ENCODE measurements at regions of chr18 and their contacts with region 1.

Region 1: GRCh38 chr18:32271672-32272208 is 81.9 kb downstream of the MEP1B start:
- DNase-seq: peak; percentile 31 to 59 (median 56)
- H3K4me3 ChIP-seq: no peak overlapping the region
- H3K27ac ChIP-seq: no peak overlapping the region
- H3K4me1 ChIP-seq: no peaks in the 10 kb centered on the region
- H3K27me3 ChIP-seq: peaks cover 0 to 12% (median 0%) of the 10 kb centered on the region in 5 experiments

Region 2: DNA sequence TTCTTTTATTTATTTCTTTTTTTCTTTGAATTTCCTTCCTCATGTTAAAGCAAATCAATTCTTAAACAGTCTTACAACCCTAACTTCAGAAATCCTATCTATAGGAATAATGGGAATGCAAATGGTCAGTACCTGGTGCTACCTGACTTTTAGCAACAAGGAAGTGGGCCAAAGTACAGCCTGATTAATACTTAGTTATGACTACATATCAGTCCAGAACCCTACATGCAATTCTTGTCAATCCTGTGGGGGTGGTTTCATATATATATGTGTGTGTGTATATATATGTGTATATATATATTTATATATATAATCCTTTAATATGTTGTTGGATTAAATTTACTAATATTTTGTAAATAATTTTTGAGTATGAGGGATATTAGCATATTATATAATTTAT is 314.0 kb before region 1 on chr18:
- CTCF ChIA-PET with region 1: no interaction called
- POLR2A ChIA-PET with region 1: no interaction called
- DNase-seq: no peak
- H3K4me3 ChIP-seq: no peak overlapping the region
- H3K27ac ChIP-seq: no peak overlapping the region
- H3K4me1 ChIP-seq: no peaks in the 10 kb centered on the region
- H3K27me3 ChIP-seq: no peaks in the 10 kb centered on the region

Region 3: GRCh38 chr18:32158108-32158624 is 113.6 kb before region 1 on chr18:
- CTCF ChIA-PET with region 1: interaction called, 14 read pairs
- POLR2A ChIA-PET with region 1: no interaction called
- DNase-seq: peak; percentile 83 to 91 (median 90)
- H3K4me3 ChIP-seq: peak overlapping the region in 3 of 7 experiments; percentile 23 to 42 (median 40)
- H3K27ac ChIP-seq: no peak overlapping the region
- H3K4me1 ChIP-seq: peaks cover 0 to 6% (median 4%) of the 10 kb centered on the region in 4 experiments
- H3K27me3 ChIP-seq: peaks cover 0 to 6% (median 2%) of the 10 kb centered on the region in 5 experiments

Region 4: GRCh38 chr18:32195881-32196815 is 75.6 kb before region 1 on chr18:
- CTCF ChIA-PET with region 1: no interaction called
- POLR2A ChIA-PET with region 1: no interaction called
- DNase-seq: no peak
- H3K4me3 ChIP-seq: no peak overlapping the region
- H3K27ac ChIP-seq: no peak overlapping the region
- H3K4me1 ChIP-seq: no peaks in the 10 kb centered on the region
- H3K27me3 ChIP-seq: peaks cover 0 to 2% (median 0%) of the 10 kb centered on the region in 5 experiments

Region 5: DNA sequence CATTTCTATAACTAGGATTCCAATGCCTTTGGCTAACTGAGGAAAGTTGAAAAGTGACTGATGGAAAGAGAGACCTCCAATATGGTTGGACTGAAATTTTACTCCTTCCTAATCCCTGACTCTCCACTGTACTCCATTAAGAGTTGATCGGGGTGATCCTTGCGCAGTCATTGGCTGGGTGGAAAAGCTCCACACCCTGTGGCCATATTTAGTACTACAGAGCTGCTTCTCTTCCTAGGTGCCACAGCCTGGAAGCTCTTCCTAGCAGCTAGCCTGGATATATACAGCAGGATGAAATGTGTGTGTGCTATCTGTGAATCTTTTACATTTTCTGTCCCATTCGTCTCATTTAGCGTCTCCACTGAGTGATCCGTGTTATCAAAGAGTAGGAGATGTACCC is 10.7 kb before region 1 on chr18:
- CTCF ChIA-PET with region 1: interaction called, 17 read pairs
- POLR2A ChIA-PET with region 1: no interaction called
- DNase-seq: no peak
- H3K4me3 ChIP-seq: no peak overlapping the region
- H3K27ac ChIP-seq: no peak overlapping the region
- H3K4me1 ChIP-seq: peaks cover 8 to 27% (median 20%) of the 10 kb centered on the region in 4 experiments
- H3K27me3 ChIP-seq: no peaks in the 10 kb centered on the region

Region 6: GRCh38 chr18:32289483-32290075 is 17.8 kb after region 1 on chr18:
- CTCF ChIA-PET with region 1: interaction called, 16 read pairs
- POLR2A ChIA-PET with region 1: no interaction called
- DNase-seq: peak; percentile 65 to 81 (median 75)
- H3K4me3 ChIP-seq: no peak overlapping the region
- H3K27ac ChIP-seq: no peak overlapping the region
- H3K4me1 ChIP-seq: no peaks in the 10 kb centered on the region
- H3K27me3 ChIP-seq: peaks cover 3 to 28% (median 8%) of the 10 kb centered on the region in 5 experiments

Region 7: DNA sequence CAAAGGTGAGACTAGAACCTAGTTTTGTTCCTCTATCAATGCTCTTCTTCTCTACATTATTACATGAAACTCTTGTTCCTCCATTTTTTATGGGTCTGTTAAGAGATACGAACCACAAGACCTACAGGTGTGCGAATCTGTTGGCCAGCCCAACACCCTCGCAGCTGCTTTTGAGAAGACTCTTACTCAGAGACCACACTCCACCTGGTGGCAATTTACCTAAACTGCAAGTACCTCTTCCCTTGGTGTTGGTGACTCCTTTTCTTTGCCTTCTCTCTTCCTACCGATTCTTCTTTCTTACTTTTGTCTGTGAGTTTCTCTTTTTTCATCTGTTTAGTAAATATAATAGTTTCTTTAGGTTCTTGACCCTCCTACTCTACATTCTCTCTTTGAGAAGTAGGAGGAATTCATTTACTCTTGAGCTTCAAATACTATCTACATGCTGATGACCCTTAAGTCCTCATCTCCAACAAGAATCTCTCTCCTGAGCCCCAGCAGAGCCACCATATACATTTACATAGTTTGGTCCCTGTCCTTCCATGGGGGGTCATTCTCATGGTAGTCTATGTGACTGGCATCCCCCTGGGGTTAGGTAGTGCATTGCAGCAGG is 280.8 kb after region 1 on chr18:
- CTCF ChIA-PET with region 1: interaction called, 13 read pairs
- POLR2A ChIA-PET with region 1: no interaction called
- DNase-seq: peak; percentile 69 to 84 (median 78)
- H3K4me3 ChIP-seq: no peak overlapping the region
- H3K27ac ChIP-seq: no peak overlapping the region
- H3K4me1 ChIP-seq: no peaks in the 10 kb centered on the region
- H3K27me3 ChIP-seq: peaks cover 0 to 6% (median 0%) of the 10 kb centered on the region in 5 experiments